WTC11 (cell line): ENCODE measurements at regions of chr17 and their contacts with region 1.

Region 1: DNA sequence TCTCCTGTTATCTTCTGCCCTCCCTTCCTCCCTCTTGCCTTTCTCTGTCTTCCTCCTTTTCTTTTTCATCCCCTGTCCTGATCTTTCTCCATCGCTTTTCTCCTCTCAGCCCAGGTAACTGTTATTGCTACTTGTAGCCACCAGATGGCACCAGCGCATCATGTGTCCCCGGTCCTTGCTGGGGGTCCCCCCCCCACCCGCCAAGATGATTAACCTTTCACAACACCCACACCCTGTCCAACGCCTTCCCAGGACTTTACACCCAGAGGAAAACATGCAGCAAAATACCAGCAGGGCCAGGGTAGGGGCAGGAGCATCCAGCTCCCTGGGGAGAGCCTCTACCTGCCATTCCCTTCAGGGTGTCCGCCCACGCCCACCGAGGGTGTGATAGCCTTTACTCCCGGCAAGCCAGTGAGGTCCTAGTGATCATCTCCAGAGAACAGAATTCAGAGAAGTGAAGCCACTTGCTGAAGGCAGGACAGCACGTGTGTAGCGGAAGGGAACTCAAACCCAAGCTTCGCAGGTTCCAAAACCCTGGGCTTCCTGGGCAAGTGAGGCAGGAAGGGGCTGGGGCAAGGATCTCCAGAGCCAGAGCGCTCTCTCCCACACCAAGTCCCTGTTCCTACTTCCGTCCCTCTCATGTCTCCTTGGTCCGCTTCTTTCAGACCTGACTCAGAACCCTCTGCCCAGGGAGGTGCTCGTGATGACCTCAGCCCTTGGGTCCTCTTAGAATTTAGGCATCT is 13.5 kb upstream of the TAC4 start:
- DNase-seq: no peak
- ATAC-seq: no peak
- H3K4me3 Mint-ChIP-seq: no peak overlapping the region
- H3K27ac Mint-ChIP-seq: no peak overlapping the region
- H3K4me1 Mint-ChIP-seq: peaks cover 41% of the 10 kb centered on the region
- H3K27me3 Mint-ChIP-seq: peaks cover 2% of the 10 kb centered on the region; the same call in 1 of the 2 replicates
- CTCF ChIP-seq: peak; percentile 80

Region 2: GRCh38 chr17:49873466-49873865 is 12.1 kb after region 1 on chr17:
- CTCF ChIA-PET with region 1: interaction called, 26 read pairs
- POLR2A ChIA-PET with region 1: interaction called, 3 read pairs
- DNase-seq: no peak
- ATAC-seq: no peak
- H3K4me3 Mint-ChIP-seq: no peak overlapping the region
- H3K27ac Mint-ChIP-seq: peak overlapping the region; percentile 68
- H3K4me1 Mint-ChIP-seq: peaks cover 48% of the 10 kb centered on the region
- H3K27me3 Mint-ChIP-seq: no peaks in the 10 kb centered on the region; the same call in 1 of the 2 replicates
- CTCF ChIP-seq: no peak

Region 3: DNA sequence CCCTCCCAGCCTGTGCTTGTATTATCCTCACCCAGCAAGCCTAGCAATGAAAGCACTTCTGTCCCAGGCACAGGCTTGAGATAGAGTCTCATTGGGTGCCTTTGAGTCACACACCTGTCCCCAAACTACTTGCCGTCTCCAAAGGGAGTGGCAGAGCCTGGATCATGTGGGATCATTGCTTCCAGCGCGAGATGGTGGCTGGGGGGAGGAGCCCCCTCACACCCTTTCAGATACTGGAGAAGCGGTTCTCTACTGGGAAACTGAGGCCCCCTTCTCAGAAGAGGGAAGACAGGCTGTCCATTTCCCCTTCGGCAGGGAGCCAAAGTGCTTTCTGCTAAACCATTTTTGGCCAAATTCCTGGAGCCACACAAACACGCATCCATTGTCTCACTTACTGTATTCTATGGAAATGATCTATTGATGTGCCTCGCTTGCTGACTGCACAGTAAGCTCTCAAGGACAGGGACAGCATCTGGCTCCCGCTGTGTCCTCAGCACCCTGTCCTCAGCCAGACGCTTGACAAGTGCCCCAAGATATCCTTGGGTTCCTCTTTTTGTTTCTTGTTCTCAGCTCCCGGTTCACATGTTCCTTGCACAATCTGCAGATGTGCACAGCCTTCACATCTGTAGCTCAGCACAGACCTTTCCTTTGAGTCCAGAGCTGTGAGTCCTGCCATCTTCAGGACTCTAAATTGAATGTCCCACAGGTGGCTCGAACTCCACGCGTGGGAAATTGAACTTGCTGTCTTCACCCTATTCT is 159.7 kb after region 1 on chr17:
- CTCF ChIA-PET with region 1: no interaction called
- POLR2A ChIA-PET with region 1: no interaction called
- DNase-seq: no peak
- ATAC-seq: no peak
- H3K4me3 Mint-ChIP-seq: no peak overlapping the region
- H3K27ac Mint-ChIP-seq: no peak overlapping the region
- H3K4me1 Mint-ChIP-seq: no peaks in the 10 kb centered on the region
- H3K27me3 Mint-ChIP-seq: peaks cover 13% of the 10 kb centered on the region
- CTCF ChIP-seq: no peak